CD4-positive, alpha-beta memory T cell (primary cell): ENCODE measurements at regions of chr5 and their contacts with region 1.

Region 1: GRCh38 chr5:14581333-14581890 is at the start of gene OTULINL:
- DNase-seq: peak; percentile 80 to 87 (median 83)
- H3K4me3 ChIP-seq: peak within 1 kb of the TSS; percentile 34 to 67
- H3K4me3 Mint-ChIP-seq: peak within 1 kb of the TSS; percentile 83 to 91 (median 90)
- H3K27ac ChIP-seq: peak within 1 kb of the TSS; percentile 67
- H3K27ac Mint-ChIP-seq: peak within 1 kb of the TSS; percentile 84 to 96 (median 91)
- H3K4me1 ChIP-seq: peaks cover 29% of the 10 kb centered on the region
- H3K4me1 Mint-ChIP-seq: peaks cover 15 to 44% (median 30%) of the 10 kb centered on the region in 4 donors
- H3K27me3 ChIP-seq: no peaks in the 10 kb centered on the region
- H3K27me3 Mint-ChIP-seq: no peaks in the 10 kb centered on the region
- total RNA-seq, gene OTULINL: 24.7 to 26.3 TPM

Region 2: DNA sequence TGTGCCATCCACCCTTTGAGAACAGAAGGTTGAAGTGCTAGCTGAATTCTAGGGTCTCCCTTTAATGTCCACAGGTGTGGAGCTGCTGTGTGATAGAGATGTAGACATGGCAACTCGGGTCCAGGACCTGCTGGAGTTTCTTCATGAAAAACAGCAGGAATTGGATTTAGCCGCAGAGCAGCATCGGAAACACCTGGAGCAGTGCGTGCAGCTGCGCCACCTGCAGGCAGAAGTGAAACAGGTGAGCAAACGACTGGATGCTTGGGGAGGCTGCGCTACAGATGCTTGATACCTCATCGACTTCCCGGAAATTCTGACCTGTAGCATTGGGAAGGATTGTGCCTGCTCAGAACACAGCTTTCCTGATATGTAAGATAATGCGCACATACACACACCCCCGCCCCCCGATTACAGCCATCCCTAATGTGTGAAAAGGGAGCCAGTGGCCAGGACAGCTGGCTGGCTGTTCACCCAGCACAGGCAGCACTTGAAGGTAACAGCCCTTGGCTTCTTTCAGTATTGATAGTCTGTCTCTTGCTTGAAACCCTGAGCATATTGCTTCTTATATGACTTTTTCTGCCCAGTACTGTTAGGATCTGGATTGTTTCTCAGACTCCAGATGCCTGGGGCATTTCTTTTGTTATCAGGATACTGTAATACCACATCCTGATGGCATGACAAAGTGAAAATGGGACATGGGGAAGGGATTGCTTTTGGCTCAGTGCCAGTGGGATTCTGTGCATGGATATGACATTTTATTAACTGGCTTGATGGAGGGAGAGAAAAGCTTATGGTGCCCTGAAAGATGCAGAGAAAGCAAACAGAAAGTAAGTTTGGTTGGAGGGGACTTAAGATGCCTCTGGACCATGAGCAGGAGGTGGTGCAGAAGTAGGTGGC is 216.6 kb before region 1 on chr5:
- CTCF ChIA-PET with region 1: interaction called, 6 read pairs
- POLR2A ChIA-PET with region 1: no interaction called
- intact Hi-C with region 1: loop called (anchors 1 kb)
- DNase-seq: no peak
- H3K4me3 ChIP-seq: no peak overlapping the region
- H3K4me3 Mint-ChIP-seq: peak overlapping the region in 1 of 8 donors; percentile 5
- H3K27ac ChIP-seq: no peak overlapping the region
- H3K27ac Mint-ChIP-seq: peak overlapping the region in 4 of 7 donors; percentile 0 to 66 (median 48)
- H3K4me1 ChIP-seq: peaks cover 28% of the 10 kb centered on the region
- H3K4me1 Mint-ChIP-seq: peaks cover 13 to 33% (median 25%) of the 10 kb centered on the region in 4 donors
- H3K27me3 ChIP-seq: no peaks in the 10 kb centered on the region
- H3K27me3 Mint-ChIP-seq: peaks cover 2% of the 10 kb centered on the region in 2 donors

Region 3: GRCh38 chr5:14415024-14415697 is 166.3 kb before region 1 on chr5:
- CTCF ChIA-PET with region 1: interaction called, 5 read pairs
- POLR2A ChIA-PET with region 1: interaction called, 26 read pairs
- intact Hi-C with region 1: loop called (anchors 1 kb)
- DNase-seq: peak in 4 of 5 donors; percentile 13 to 19 (median 16)
- H3K4me3 ChIP-seq: peak overlapping the region in 1 of 2 donors; percentile 29
- H3K4me3 Mint-ChIP-seq: peak overlapping the region; percentile 48 to 79 (median 63)
- H3K27ac ChIP-seq: peak overlapping the region; percentile 58
- H3K27ac Mint-ChIP-seq: peak overlapping the region; percentile 83 to 98 (median 95)
- H3K4me1 ChIP-seq: peaks cover 47% of the 10 kb centered on the region
- H3K4me1 Mint-ChIP-seq: peaks cover 32 to 66% (median 46%) of the 10 kb centered on the region in 4 donors
- H3K27me3 ChIP-seq: no peaks in the 10 kb centered on the region
- H3K27me3 Mint-ChIP-seq: peaks cover 0 to 2% of the 10 kb centered on the region in 2 donors

Region 4: GRCh38 chr5:14595189-14595588 is 13.8 kb after region 1 on chr5:
- CTCF ChIA-PET with region 1: interaction called, 36 read pairs
- POLR2A ChIA-PET with region 1: interaction called, 108 read pairs
- intact Hi-C with region 1: loop called (anchors 1 kb)
- DNase-seq: peak; percentile 40 to 56 (median 49)
- H3K4me3 ChIP-seq: peak overlapping the region; percentile 16 to 34
- H3K4me3 Mint-ChIP-seq: peak overlapping the region; percentile 78 to 88 (median 84)
- H3K27ac ChIP-seq: peak overlapping the region; percentile 55
- H3K27ac Mint-ChIP-seq: peak overlapping the region; percentile 84 to 98 (median 96)
- H3K4me1 ChIP-seq: peaks cover 86% of the 10 kb centered on the region
- H3K4me1 Mint-ChIP-seq: peaks cover 68 to 90% (median 79%) of the 10 kb centered on the region in 4 donors
- H3K27me3 ChIP-seq: no peaks in the 10 kb centered on the region
- H3K27me3 Mint-ChIP-seq: no peaks in the 10 kb centered on the region

Region 5: GRCh38 chr5:14706615-14707021 is 125.2 kb after region 1 on chr5:
- CTCF ChIA-PET with region 1: no interaction called
- POLR2A ChIA-PET with region 1: no interaction called
- intact Hi-C with region 1: loop called (anchors 1 kb)
- DNase-seq: peak; percentile 67 to 80 (median 73)
- H3K4me3 ChIP-seq: peak overlapping the region in 1 of 2 donors; percentile 26
- H3K4me3 Mint-ChIP-seq: peak overlapping the region; percentile 81 to 90 (median 82)
- H3K27ac ChIP-seq: peak overlapping the region; percentile 49
- H3K27ac Mint-ChIP-seq: peak overlapping the region; percentile 94 to 99 (median 99)
- H3K4me1 ChIP-seq: peaks cover 76% of the 10 kb centered on the region
- H3K4me1 Mint-ChIP-seq: peaks cover 66 to 91% (median 80%) of the 10 kb centered on the region in 4 donors
- H3K27me3 ChIP-seq: no peaks in the 10 kb centered on the region
- H3K27me3 Mint-ChIP-seq: no peaks in the 10 kb centered on the region

Region 6: GRCh38 chr5:14849516-14850294 is 268.3 kb after region 1 on chr5:
- CTCF ChIA-PET with region 1: no interaction called
- POLR2A ChIA-PET with region 1: no interaction called
- intact Hi-C with region 1: no loop called
- DNase-seq: no peak
- H3K4me3 ChIP-seq: no peak overlapping the region
- H3K4me3 Mint-ChIP-seq: no peak overlapping the region
- H3K27ac ChIP-seq: no peak overlapping the region
- H3K27ac Mint-ChIP-seq: peak overlapping the region in 1 of 7 donors; percentile 55
- H3K4me1 ChIP-seq: no peaks in the 10 kb centered on the region
- H3K4me1 Mint-ChIP-seq: peaks cover 26 to 34% (median 29%) of the 10 kb centered on the region in 4 donors
- H3K27me3 ChIP-seq: no peaks in the 10 kb centered on the region
- H3K27me3 Mint-ChIP-seq: no peaks in the 10 kb centered on the region